B cell (primary cell): ENCODE measurements at regions of chr5 and their contacts with region 1.

Region 1: DNA sequence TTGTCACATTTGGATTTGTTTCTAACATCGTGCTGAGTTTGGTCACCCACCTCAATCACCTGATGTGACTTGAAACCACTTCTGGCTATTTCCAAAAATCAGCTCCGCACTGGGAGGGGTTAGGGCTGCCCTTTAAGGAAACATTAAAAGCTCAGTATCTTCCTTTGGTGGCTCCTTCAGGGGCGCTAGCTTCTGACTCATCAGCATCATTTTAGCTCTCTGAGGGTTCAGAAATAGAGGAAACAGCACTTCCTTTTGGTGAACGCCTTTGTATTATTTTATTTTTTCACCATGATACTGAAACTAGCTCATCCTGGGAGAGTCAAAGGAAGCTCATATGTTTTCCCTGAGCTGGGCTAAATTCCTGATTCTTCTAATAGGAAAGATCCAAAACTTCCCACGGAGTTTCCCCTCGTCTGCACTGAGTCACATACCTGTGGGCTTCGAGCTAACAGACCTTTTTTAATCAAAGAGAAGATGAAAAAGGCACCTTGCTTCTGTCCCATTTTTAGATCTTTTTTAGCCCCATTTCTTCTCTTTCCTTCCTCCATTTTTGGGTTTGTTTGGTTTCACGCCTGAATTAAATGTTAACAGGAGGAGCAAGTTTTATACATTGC is 48.2 kb downstream of the ROPN1L start:
- DNase-seq: peak; percentile 63
- ATAC-seq: peak; percentile 93
- H3K4me3 ChIP-seq: peak overlapping the region in 1 of 5 experiments; percentile 35
- H3K4me3 Mint-ChIP-seq: peak overlapping the region; percentile 72
- H3K27ac ChIP-seq: peak overlapping the region; percentile 4 to 8
- H3K27ac Mint-ChIP-seq: peak overlapping the region; percentile 71
- H3K4me1 ChIP-seq: peaks cover 25 to 39% of the 10 kb centered on the region in 2 donors
- H3K4me1 Mint-ChIP-seq: peaks cover 51% of the 10 kb centered on the region
- H3K27me3 ChIP-seq: no peaks in the 10 kb centered on the region
- H3K27me3 Mint-ChIP-seq: no peaks in the 10 kb centered on the region
- CTCF ChIP-seq: no peak

Region 2: GRCh38 chr5:10607666-10608073 is 117.8 kb after region 1 on chr5:
- CTCF ChIA-PET with region 1: interaction called, 4 read pairs
- POLR2A ChIA-PET with region 1: no interaction called
- intact Hi-C with region 1: loop called (anchors 5 kb)
- DNase-seq: peak; percentile 76
- ATAC-seq: peak; percentile 26
- H3K4me3 ChIP-seq: peak overlapping the region in 4 of 5 experiments; percentile 23 to 59 (median 40)
- H3K4me3 Mint-ChIP-seq: peak overlapping the region; percentile 82
- H3K27ac ChIP-seq: peak overlapping the region; percentile 45 to 73
- H3K27ac Mint-ChIP-seq: peak overlapping the region; percentile 86
- H3K4me1 ChIP-seq: peaks cover 25 to 30% of the 10 kb centered on the region in 2 donors
- H3K4me1 Mint-ChIP-seq: peaks cover 49% of the 10 kb centered on the region
- H3K27me3 ChIP-seq: no peaks in the 10 kb centered on the region
- H3K27me3 Mint-ChIP-seq: no peaks in the 10 kb centered on the region
- CTCF ChIP-seq: no peak